Calu3 (cell line): ENCODE measurements at regions of chr10 and their contacts with region 1.

Region 1: GRCh38 chr10:90047243-90047729 is 345.9 kb downstream of the KIF20B start:
- DNase-seq: no peak
- H3K4me3 Mint-ChIP-seq: no peak overlapping the region
- H3K27ac Mint-ChIP-seq: no peak overlapping the region
- H3K4me1 Mint-ChIP-seq: peaks cover 15% of the 10 kb centered on the region
- H3K27me3 Mint-ChIP-seq: no peaks in the 10 kb centered on the region
- CTCF ChIP-seq: no peak

Region 2: DNA sequence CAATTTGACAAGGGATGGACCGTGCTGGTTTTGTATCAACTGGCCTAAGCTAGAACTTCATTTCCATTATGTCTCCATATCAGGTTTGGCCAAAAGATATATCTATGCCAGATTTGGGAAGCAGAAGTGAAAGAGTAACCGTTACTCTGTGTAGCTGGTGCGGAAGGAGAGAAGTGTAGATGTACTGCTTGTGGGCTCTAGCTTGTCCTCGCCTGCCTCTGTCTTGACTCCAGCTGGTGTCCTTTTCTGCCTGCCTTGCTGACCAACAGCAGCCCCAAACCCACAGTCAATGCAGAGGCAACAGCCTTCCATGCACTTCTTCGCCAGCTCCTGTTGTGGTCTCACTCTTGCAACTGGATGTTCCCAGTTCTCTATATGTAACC is 217.4 kb before region 1 on chr10:
- CTCF ChIA-PET with region 1: no interaction called
- intact Hi-C with region 1: no loop called
- DNase-seq: no peak
- H3K4me3 Mint-ChIP-seq: no peak overlapping the region
- H3K27ac Mint-ChIP-seq: no peak overlapping the region
- H3K4me1 Mint-ChIP-seq: no peaks in the 10 kb centered on the region
- H3K27me3 Mint-ChIP-seq: no peaks in the 10 kb centered on the region
- CTCF ChIP-seq: no peak

Region 3: GRCh38 chr10:90087197-90088007 is 40.1 kb after region 1 on chr10:
- CTCF ChIA-PET with region 1: no interaction called
- intact Hi-C with region 1: loop called (anchors 5 kb)
- DNase-seq: peak; percentile 18
- H3K4me3 Mint-ChIP-seq: no peak overlapping the region
- H3K27ac Mint-ChIP-seq: peak overlapping the region; percentile 48
- H3K4me1 Mint-ChIP-seq: no peaks in the 10 kb centered on the region
- H3K27me3 Mint-ChIP-seq: peaks cover 7% of the 10 kb centered on the region
- CTCF ChIP-seq: no peak

Region 4: GRCh38 chr10:90197766-90198165 is 150.5 kb after region 1 on chr10:
- CTCF ChIA-PET with region 1: no interaction called
- intact Hi-C with region 1: no loop called
- DNase-seq: no peak
- H3K4me3 Mint-ChIP-seq: no peak overlapping the region
- H3K27ac Mint-ChIP-seq: no peak overlapping the region
- H3K4me1 Mint-ChIP-seq: no peaks in the 10 kb centered on the region
- H3K27me3 Mint-ChIP-seq: no peaks in the 10 kb centered on the region
- CTCF ChIP-seq: no peak

Region 5: DNA sequence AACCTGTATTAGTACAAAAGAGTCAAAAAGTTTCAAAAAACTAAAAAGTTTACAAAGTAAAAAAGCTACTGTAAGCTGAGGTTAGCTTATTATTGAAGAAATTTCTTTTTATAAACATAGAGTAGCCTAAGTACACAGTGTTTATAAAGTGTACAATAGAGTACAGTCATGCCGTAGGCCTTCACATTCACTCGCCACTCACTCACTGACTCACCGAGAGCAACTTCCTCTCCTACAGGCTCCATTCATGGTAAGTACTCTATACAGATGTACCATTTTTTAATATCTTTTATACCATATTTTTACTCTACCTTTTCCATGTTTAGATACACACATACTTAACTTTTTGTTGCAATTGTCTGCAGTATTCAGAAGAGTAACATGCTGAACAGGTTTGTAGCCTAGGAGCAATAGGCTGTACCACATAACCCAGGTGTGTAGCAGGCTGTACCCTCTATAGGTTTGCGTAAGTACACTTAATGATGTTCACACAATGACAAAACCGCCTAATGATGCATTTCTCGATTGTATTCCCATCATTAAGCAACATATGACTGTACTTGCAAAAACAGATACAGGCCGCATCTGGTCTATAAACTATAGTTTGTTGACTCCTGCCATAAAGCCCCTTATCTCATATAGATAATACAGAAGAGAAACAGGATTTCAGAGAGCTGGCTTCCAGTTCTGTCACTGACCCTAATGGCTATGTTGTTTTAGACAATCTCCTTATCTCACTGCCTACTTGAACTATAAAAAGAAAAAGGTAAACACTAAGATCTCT is 371.8 kb after region 1 on chr10:
- CTCF ChIA-PET with region 1: no interaction called
- intact Hi-C with region 1: no loop called
- DNase-seq: peak; percentile 23
- H3K4me3 Mint-ChIP-seq: no peak overlapping the region
- H3K27ac Mint-ChIP-seq: no peak overlapping the region
- H3K4me1 Mint-ChIP-seq: no peaks in the 10 kb centered on the region
- H3K27me3 Mint-ChIP-seq: no peaks in the 10 kb centered on the region
- CTCF ChIP-seq: no peak